K562 (cell line): ENCODE measurements at regions of chr1 and their contacts with region 1.

Region 1: GRCh38 chr1:30779294-30780071 is 21.9 kb upstream of the LAPTM5 start:
- DNase-seq: peak; percentile 89 to 97 (median 91)
- ATAC-seq: peak; percentile 76
- H3K4me3 ChIP-seq: peak overlapping the region; percentile 19
- H3K27ac ChIP-seq: peak overlapping the region; percentile 93
- H3K4me1 ChIP-seq: peaks cover 64% of the 10 kb centered on the region in 2 experiments
- H3K27me3 ChIP-seq: no peaks in the 10 kb centered on the region
- CTCF ChIP-seq: peak; percentile 96 to 99 (median 99)
- EP300 ChIP-seq: no peak
- POLR2A ChIP-seq: no peak
- RAD21 ChIP-seq: peak; percentile 100

Region 2: GRCh38 chr1:29230553-29231378 is 1548.7 kb before region 1 on chr1 and contains the start of gene MECR:
- CTCF ChIA-PET with region 1: no interaction called
- POLR2A ChIA-PET with region 1: no interaction called
- in situ Hi-C with region 1: no loop called
- intact Hi-C with region 1: loop called (anchors 10 kb)
- DNase-seq: peak; percentile 98 to 99 (median 99)
- ATAC-seq: peak; percentile 97
- H3K4me3 ChIP-seq: peak within 1 kb of the TSS; percentile 78
- H3K27ac ChIP-seq: peak within 1 kb of the TSS; percentile 75
- H3K4me1 ChIP-seq: peaks cover 7 to 12% of the 10 kb centered on the region in 2 experiments; a peak in 3 of 5 replicates
- H3K27me3 ChIP-seq: no peaks in the 10 kb centered on the region
- CTCF ChIP-seq: peak; percentile 42 to 58 (median 47)
- EP300 ChIP-seq: peak; percentile 3; the same call in 1 of the 2 replicates
- POLR2A ChIP-seq: peak; percentile 91
- RAD21 ChIP-seq: peak in 1 of 2 experiments; percentile 3; a peak in 1 of 4 replicates
- polyA plus RNA-seq, gene MECR: 10.4 to 18.0 TPM

Region 3: GRCh38 chr1:30718636-30719405 is 60.7 kb before region 1 on chr1:
- CTCF ChIA-PET with region 1: interaction called, 187 read pairs
- POLR2A ChIA-PET with region 1: interaction called, 117 read pairs
- in situ Hi-C with region 1: loop called (anchors 5 kb)
- intact Hi-C with region 1: loop called (anchors 1 kb)
- DNase-seq: peak in 2 of 4 experiments; percentile 81 to 98
- ATAC-seq: peak; percentile 85
- H3K4me3 ChIP-seq: peak overlapping the region; percentile 61
- H3K27ac ChIP-seq: peak overlapping the region; percentile 95
- H3K4me1 ChIP-seq: peaks cover 37 to 63% of the 10 kb centered on the region in 2 experiments
- H3K27me3 ChIP-seq: no peaks in the 10 kb centered on the region
- CTCF ChIP-seq: peak in 2 of 3 experiments; percentile 93 to 96; a peak in 5 of 6 replicates
- EP300 ChIP-seq: no peak
- POLR2A ChIP-seq: peak; percentile 95
- RAD21 ChIP-seq: peak; percentile 99 to 100; a peak in 3 of 4 replicates

Region 4: DNA sequence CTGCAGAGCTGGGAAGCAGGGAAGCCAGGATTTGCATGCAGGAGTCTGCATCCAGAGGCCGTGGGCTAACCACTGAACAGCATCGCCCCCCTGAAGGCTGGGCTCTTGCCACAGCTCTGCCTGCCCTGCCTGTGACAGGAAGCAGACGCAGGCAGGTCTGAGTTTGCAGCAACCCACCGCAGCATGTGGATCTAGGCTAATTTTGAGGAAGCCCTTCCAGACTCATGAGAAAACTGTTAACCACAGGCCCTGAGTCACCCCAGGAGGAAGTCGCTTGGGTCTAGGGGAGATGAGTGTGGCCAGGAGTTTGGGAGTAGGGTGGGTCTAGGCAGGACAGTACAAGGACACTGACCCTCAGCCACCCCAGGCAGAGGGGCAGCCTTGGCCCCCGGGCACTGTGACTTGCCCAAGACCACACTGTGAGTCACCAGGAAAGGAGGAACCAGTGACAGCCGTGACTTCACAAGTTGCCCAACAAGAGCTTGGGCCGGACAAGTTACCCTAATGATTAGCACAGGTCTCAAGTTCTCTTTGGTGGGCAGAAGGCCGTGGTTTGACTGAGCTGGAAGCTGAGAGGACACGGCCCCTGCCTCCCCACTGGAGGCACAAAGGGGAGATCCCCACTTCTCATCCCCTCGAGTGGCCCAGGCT is 22.8 kb before region 1 on chr1:
- CTCF ChIA-PET with region 1: no interaction called
- POLR2A ChIA-PET with region 1: interaction called, 23 read pairs
- in situ Hi-C with region 1: no loop called
- intact Hi-C with region 1: loop called (anchors 2 kb)
- DNase-seq: peak; percentile 48 to 82 (median 64)
- ATAC-seq: peak; percentile 63
- H3K4me3 ChIP-seq: 0 out of 2 replicates have a peak overlapping the region, but pooled peaks have one; percentile 0
- H3K27ac ChIP-seq: peak overlapping the region; percentile 81
- H3K4me1 ChIP-seq: peaks cover 59 to 65% of the 10 kb centered on the region in 2 experiments
- H3K27me3 ChIP-seq: no peaks in the 10 kb centered on the region
- CTCF ChIP-seq: no peak
- EP300 ChIP-seq: peak; percentile 58
- POLR2A ChIP-seq: no peak
- RAD21 ChIP-seq: 0 out of 4 replicates have a peak, but pooled peaks of 1 of the 2 experiments have one; percentile 26

Region 5: DNA sequence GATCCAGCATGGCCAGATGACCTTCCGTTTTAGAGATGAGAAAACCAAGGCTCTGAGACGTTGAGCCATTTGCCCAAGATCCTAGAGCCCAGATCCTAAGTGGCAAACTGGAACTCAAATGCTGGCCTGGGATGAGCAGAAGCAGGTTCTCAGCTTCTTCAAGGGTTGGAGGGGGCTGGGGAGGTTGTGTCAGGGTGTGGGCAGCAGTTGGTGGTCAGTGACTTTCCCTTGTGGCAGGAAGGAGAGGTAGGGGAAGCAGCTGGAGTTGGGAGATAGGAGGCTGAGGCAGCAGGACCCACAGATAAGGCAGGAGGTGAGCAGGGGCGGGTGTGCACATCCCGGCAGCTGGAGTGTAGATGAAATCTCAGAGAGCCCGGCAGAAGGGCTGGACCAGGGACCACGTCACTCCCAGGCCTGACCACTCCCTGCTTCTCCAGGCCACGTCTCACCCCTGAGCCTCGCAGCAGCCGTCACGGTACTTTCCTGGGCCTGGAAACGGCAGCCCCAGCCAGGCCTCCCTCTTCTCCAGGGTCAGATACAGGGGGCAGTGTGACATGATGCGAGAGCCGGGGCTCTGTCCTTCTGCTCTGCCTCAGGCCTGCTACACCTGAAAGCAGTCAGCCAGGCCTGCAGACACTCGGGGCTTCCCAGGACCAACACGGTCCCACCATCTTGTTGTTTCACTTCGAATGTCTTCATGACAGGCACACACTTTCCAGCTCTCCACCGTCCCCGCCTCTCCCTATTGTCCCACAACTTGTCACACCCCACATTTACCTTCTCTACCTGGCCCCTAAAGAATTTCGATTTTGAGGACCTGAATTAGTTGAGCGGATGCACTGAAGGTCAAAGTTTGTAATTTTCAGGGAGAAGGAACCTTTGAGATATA is 10.4 kb before region 1 on chr1:
- CTCF ChIA-PET with region 1: interaction called, 3 read pairs
- POLR2A ChIA-PET with region 1: interaction called, 59 read pairs
- in situ Hi-C with region 1: no loop called
- intact Hi-C with region 1: loop called (anchors 1 kb)
- DNase-seq: peak; percentile 99 to 100 (median 100)
- ATAC-seq: peak; percentile 96
- H3K4me3 ChIP-seq: peak overlapping the region; percentile 4
- H3K27ac ChIP-seq: peak overlapping the region; percentile 98
- H3K4me1 ChIP-seq: peaks cover 56 to 68% of the 10 kb centered on the region in 2 experiments
- H3K27me3 ChIP-seq: no peaks in the 10 kb centered on the region; a peak in 1 of 5 replicates
- CTCF ChIP-seq: peak; percentile 41 to 52 (median 42); a peak in 3 of 6 replicates
- EP300 ChIP-seq: peak; percentile 100
- POLR2A ChIP-seq: peak; percentile 82
- RAD21 ChIP-seq: peak; percentile 39 to 47

Region 6: DNA sequence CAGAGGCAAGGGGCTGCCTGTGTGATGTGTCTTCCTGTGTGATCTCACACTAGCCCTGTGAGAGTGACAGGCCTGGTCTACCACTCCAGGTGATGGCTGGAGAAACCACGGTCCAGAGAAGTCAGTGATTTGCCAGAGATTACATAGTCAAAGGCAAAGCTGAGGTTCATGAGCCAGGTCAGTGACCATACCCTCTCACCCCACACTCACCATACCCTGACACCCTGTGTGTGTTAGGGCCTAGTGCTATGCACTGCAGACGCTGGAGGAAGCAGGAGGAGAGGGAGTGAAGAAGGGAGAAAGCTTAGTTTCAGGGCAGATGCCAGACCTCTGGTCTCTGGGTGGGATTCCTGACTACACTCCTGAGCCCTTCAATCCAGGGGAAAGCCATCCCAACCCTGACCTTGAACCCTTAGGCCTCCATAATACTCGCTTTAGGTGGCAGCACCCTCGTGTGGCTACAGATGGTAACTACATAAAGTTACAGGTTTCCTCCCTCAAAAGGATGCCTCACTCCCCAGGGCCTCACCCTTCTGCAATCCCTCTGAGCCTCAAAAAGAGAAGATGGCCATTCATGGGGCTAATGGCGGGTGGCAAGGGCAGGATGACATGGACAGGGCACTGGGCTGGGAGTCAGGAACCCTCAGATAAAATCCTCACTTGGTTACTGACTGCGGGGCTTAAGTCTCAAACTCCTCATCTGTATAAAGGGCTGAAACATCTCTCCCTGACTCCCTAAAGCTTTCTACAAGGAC is 149.8 kb after region 1 on chr1:
- CTCF ChIA-PET with region 1: interaction called, 26 read pairs
- POLR2A ChIA-PET with region 1: interaction called, 6 read pairs
- in situ Hi-C with region 1: no loop called
- intact Hi-C with region 1: loop called (anchors 1 kb)
- DNase-seq: peak; percentile 74 to 79 (median 78)
- ATAC-seq: peak; percentile 92
- H3K4me3 ChIP-seq: no peak overlapping the region
- H3K27ac ChIP-seq: no peak overlapping the region
- H3K4me1 ChIP-seq: no peaks in the 10 kb centered on the region; a peak in 2 of 5 replicates
- H3K27me3 ChIP-seq: no peaks in the 10 kb centered on the region
- CTCF ChIP-seq: peak; percentile 78 to 95 (median 90)
- EP300 ChIP-seq: no peak
- POLR2A ChIP-seq: no peak; the same call in 1 of the 2 replicates
- RAD21 ChIP-seq: peak; percentile 83 to 96